Right ventricle myocardium inferior (tissue), 1 donor: ENCODE measurements at regions of chrX and their contacts with region 1.

Region 1: GRCh38 chrX:13110433-13111324 is 66.3 kb upstream of the FAM9C start:
- DNase-seq: no peak
- ATAC-seq: peak; percentile 91

Region 2: DNA sequence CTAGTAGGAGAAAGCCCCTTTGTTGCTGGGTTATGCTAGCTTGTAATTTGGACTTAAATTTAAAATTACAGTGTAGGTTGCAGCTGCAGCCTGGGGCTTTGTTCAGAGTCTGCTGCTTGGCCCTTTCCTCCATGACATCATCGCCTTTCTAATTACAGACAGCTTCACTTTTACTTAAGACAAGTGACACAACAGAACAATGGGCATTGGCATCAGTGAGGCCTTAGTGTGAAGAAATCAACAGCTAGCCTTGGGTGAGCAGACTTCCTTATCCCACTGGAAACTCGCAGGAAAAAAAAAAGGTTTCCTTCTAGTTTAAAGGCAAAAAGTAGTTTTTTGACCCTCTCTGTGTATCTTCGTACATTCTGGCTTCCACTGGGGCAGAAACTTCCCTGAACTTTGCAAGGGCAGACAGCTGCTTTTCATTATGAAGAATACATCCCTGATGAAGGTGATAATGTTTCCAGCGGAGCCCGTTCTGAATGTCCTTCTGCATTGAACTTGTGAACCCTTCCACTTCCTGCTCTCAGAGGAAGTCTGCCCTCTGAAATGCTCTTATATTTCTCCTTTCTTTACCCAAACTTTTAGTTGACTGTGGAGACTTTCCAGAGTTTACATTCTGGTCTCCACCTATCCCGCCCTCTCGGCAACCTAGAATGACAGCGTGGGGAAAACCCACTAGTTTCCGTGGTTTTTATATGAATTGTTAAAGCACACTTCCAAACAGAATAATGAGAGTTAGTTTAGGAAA is 57.0 kb after region 1 on chrX:
- intact Hi-C with region 1: loop called (anchors 10 kb)
- DNase-seq: peak; percentile 54
- ATAC-seq: peak; percentile 72

Region 3: GRCh38 chrX:13212191-13212651 is 101.5 kb after region 1 on chrX:
- intact Hi-C with region 1: no loop called
- DNase-seq: no peak
- ATAC-seq: peak; percentile 72

Region 4: GRCh38 chrX:13223868-13224555 is 113.3 kb after region 1 on chrX:
- intact Hi-C with region 1: loop called (anchors 10 kb)
- DNase-seq: no peak
- ATAC-seq: peak; percentile 59

Region 5: GRCh38 chrX:13311560-13311959 is 200.9 kb after region 1 on chrX:
- intact Hi-C with region 1: no loop called
- DNase-seq: no peak
- ATAC-seq: no peak

Region 6: GRCh38 chrX:13360146-13360545 is 249.5 kb after region 1 on chrX:
- intact Hi-C with region 1: loop called (anchors 10 kb)
- DNase-seq: no peak
- ATAC-seq: peak; percentile 92

Region 7: DNA sequence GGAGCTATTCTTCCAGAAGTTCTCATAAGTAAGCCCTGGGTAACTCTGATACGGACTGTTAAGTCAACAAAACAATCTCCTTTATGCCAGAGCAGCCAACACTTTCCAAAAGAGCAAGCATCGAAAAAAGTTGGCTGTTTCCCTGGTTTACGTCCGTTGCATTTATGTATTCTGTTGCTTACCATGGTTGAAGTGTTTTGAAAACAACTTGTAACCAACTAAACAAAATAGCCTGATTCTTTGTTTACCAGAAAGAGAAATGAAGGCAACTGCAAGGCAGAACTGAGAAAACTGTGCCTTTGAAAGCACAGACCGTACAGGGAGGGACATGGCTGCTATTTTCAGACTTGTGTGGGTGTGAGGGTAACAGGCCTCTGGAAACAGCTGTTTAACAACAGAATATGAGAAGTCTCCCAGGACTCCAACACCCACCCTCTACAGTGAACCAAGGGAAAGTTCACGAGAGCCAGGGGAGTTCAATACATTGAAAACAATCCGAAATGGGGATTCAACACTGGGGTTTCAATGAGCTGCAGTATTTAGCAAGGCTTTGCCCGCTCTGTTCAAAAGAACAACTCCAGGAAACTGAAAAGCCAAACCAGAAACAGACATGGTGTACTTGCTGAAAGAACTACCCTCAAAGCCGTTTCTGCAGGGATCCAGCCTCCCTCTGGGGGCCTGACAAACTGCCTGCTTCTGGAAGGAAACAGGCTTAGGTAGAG is 362.9 kb after region 1 on chrX:
- intact Hi-C with region 1: loop called (anchors 10 kb)
- DNase-seq: no peak
- ATAC-seq: peak; percentile 74